Heart left ventricle (tissue), 16 donors: ENCODE measurements at regions of chr9 and their contacts with region 1.

Region 1: DNA sequence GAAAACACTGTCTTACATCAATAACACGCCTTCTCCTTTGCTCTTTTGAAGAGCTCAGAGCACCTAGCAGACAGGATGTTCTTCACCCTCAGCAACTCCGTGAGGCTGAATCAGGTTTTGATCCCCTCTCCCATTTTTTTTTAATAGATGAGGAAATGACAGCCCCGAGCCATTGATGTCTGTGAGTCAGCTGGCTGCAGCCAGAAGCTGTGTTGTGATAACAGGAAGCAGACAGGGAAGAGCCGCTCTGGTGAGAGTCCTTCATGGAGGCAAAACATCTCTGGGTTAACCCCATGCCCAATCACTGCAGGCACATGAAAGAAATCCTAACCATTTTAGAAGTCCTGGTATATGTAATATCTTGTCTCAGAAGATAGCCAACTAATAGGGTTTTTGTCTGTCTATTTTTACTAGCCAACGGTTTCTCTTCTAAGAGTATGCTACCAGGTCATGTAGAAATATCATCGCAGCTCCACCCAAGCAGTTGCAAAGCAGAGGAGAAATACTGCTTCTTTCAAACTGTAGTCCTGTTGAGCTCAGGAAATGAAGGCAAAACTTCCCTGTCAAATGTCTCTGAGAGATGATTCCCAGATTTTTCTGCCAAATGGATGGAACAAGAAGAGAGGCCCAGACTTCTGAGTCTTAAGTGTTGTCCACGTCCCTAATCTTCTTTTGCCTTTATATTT is 568.9 kb downstream of the CCDC171 start:
- DNase-seq: no peak
- ATAC-seq: no peak
- H3K4me3 ChIP-seq: no peak overlapping the region
- H3K27ac ChIP-seq: no peak overlapping the region
- H3K4me1 ChIP-seq: no peaks in the 10 kb centered on the region
- H3K27me3 ChIP-seq: no peaks in the 10 kb centered on the region
- CTCF ChIP-seq: no peak
- POLR2A ChIP-seq: no peak

Region 2: GRCh38 chr9:16058131-16058549 is 63.6 kb before region 1 on chr9:
- intact Hi-C with region 1: loop called in 1 of 10 experiments (anchors 10 kb)
- DNase-seq: no peak
- ATAC-seq: no peak
- H3K4me3 ChIP-seq: no peak overlapping the region
- H3K27ac ChIP-seq: no peak overlapping the region
- H3K4me1 ChIP-seq: no peaks in the 10 kb centered on the region
- H3K27me3 ChIP-seq: no peaks in the 10 kb centered on the region
- CTCF ChIP-seq: no peak
- POLR2A ChIP-seq: no peak